Activated CD4-positive, alpha-beta T cell treated with anti-CD3 and anti-CD28 coated beads for 36 hours (primary cell): ENCODE measurements at regions of chr11 and their contacts with region 1.

Region 1: GRCh38 chr11:27158722-27159679 is 118.4 kb downstream of the BBOX1 start:
- DNase-seq: peak; percentile 31
- ATAC-seq: no peak
- H3K4me3 Mint-ChIP-seq: no peak overlapping the region
- H3K27ac Mint-ChIP-seq: no peak overlapping the region
- H3K4me1 Mint-ChIP-seq: no peaks in the 10 kb centered on the region
- H3K27me3 Mint-ChIP-seq: peaks cover 9% of the 10 kb centered on the region

Region 2: GRCh38 chr11:26753723-26754504 is 405.1 kb before region 1 on chr11:
- CTCF ChIA-PET with region 1: no interaction called
- POLR2A ChIA-PET with region 1: no interaction called
- intact Hi-C with region 1: loop called (anchors 1 to 10 kb)
- DNase-seq: peak; percentile 27
- ATAC-seq: no peak
- H3K4me3 Mint-ChIP-seq: no peak overlapping the region
- H3K27ac Mint-ChIP-seq: no peak overlapping the region
- H3K4me1 Mint-ChIP-seq: no peaks in the 10 kb centered on the region
- H3K27me3 Mint-ChIP-seq: no peaks in the 10 kb centered on the region